CD14-positive monocyte (primary cell): ENCODE measurements at regions of chr4 and their contacts with region 1.

Region 1: GRCh38 chr4:123819362-123820035 is 422.9 kb downstream of the SPRY1 start:
- DNase-seq: peak in 1 of 3 donors; percentile 12
- H3K4me3 ChIP-seq: no peak overlapping the region
- H3K4me3 Mint-ChIP-seq: no peak overlapping the region
- H3K27ac ChIP-seq: no peak overlapping the region
- H3K27ac Mint-ChIP-seq: peak overlapping the region in 2 of 7 donors; percentile 4 to 69
- H3K4me1 ChIP-seq: peaks cover 6% of the 10 kb centered on the region in 2 donors
- H3K4me1 Mint-ChIP-seq: peaks cover 14% of the 10 kb centered on the region
- H3K27me3 ChIP-seq: no peaks in the 10 kb centered on the region
- H3K27me3 Mint-ChIP-seq: peaks cover 0 to 2% (median 0%) of the 10 kb centered on the region in 3 donors
- CTCF ChIP-seq: no peak

Region 2: DNA sequence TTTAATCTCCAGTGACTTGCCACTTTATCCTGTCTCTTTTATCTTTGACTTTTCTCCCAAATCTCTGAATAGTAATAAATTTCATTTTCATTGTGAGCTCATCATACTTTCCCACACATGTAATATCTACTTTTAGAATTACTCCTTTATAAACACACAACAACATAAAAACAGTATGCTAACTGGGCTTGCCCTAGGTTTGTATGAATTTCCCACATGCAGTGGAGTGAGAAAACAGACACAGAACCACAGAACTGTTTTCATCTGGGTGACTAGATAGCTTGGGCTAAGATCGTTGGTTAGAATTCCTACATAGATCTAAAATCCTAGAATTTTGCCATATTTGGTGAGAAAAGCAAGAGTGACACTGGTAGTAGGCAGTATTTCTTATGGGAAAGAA is 13.4 kb before region 1 on chr4:
- intact Hi-C with region 1: no loop called
- DNase-seq: no peak
- H3K4me3 ChIP-seq: no peak overlapping the region
- H3K4me3 Mint-ChIP-seq: no peak overlapping the region
- H3K27ac ChIP-seq: no peak overlapping the region
- H3K27ac Mint-ChIP-seq: no peak overlapping the region
- H3K4me1 ChIP-seq: peaks cover 0 to 5% of the 10 kb centered on the region in 2 donors
- H3K4me1 Mint-ChIP-seq: peaks cover 1% of the 10 kb centered on the region
- H3K27me3 ChIP-seq: no peaks in the 10 kb centered on the region
- H3K27me3 Mint-ChIP-seq: peaks cover 0 to 3% (median 1%) of the 10 kb centered on the region in 3 donors
- CTCF ChIP-seq: no peak

Region 3: GRCh38 chr4:124712372-124713184 is 893.1 kb after region 1 on chr4 and contains the start of gene ANKRD50:
- intact Hi-C with region 1: loop called in 1 of 2 experiments (anchors 10 kb)
- DNase-seq: peak; percentile 74 to 83 (median 81)
- H3K4me3 ChIP-seq: peak within 1 kb of the TSS; percentile 88 to 94 (median 93)
- H3K4me3 Mint-ChIP-seq: peak within 1 kb of the TSS; percentile 90 to 95
- H3K27ac ChIP-seq: peak within 1 kb of the TSS; percentile 81 to 95
- H3K27ac Mint-ChIP-seq: peak within 1 kb of the TSS in 6 of 7 donors; percentile 96 to 99 (median 98)
- H3K4me1 ChIP-seq: peaks cover 25 to 44% of the 10 kb centered on the region in 2 donors
- H3K4me1 Mint-ChIP-seq: peaks cover 23% of the 10 kb centered on the region
- H3K27me3 ChIP-seq: no peaks in the 10 kb centered on the region
- H3K27me3 Mint-ChIP-seq: no peaks in the 10 kb centered on the region
- CTCF ChIP-seq: no peak
- polyA plus RNA-seq, gene ANKRD50: 2.6 to 6.4 (median 5.0) TPM